ENCODE measurements at regions of chr9 and their contacts with region 1.

Region 1: GRCh38 chr9:84781458-84781857 is 111.9 kb downstream of the NTRK2 start:
- DNase-seq: peak; percentile 28
- H3K4me3 Mint-ChIP-seq: no peak overlapping the region
- H3K27ac Mint-ChIP-seq: no peak overlapping the region
- H3K4me1 Mint-ChIP-seq: no peaks in the 10 kb centered on the region
- H3K27me3 Mint-ChIP-seq: no peaks in the 10 kb centered on the region
- CTCF ChIP-seq: no peak

Region 2: GRCh38 chr9:84697509-84698114 is 83.8 kb before region 1 on chr9:
- CTCF ChIA-PET with region 1: interaction called, 9 read pairs
- intact Hi-C with region 1: loop called (anchors 1 kb)
- DNase-seq: peak; percentile 78
- H3K4me3 Mint-ChIP-seq: no peak overlapping the region
- H3K27ac Mint-ChIP-seq: no peak overlapping the region
- H3K4me1 Mint-ChIP-seq: no peaks in the 10 kb centered on the region
- H3K27me3 Mint-ChIP-seq: no peaks in the 10 kb centered on the region
- CTCF ChIP-seq: peak; percentile 53

Region 3: DNA sequence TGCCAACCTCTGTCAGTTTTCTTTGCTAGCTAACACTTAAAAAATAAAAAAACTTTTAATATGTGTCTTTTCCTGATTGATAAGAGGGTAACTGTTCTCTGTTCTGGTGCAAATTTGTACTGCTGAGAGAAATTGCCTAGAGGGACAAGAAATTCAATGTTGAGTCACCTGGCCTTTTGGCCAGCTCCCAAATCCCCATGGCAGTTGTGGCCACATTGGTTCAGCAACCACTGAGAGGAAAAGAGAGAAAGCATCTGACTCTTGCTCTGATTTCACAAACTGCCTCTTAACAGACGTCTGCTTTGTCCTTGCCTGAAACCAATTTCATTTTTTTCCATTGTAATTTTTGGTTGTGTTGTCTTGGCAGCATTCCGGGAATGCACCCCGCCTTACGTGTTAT is 69.6 kb before region 1 on chr9:
- CTCF ChIA-PET with region 1: no interaction called
- intact Hi-C with region 1: loop called (anchors 5 kb)
- DNase-seq: peak; percentile 82
- H3K4me3 Mint-ChIP-seq: peak overlapping the region; percentile 56
- H3K27ac Mint-ChIP-seq: peak overlapping the region; percentile 84
- H3K4me1 Mint-ChIP-seq: peaks cover 54% of the 10 kb centered on the region
- H3K27me3 Mint-ChIP-seq: no peaks in the 10 kb centered on the region
- CTCF ChIP-seq: no peak

Region 4: DNA sequence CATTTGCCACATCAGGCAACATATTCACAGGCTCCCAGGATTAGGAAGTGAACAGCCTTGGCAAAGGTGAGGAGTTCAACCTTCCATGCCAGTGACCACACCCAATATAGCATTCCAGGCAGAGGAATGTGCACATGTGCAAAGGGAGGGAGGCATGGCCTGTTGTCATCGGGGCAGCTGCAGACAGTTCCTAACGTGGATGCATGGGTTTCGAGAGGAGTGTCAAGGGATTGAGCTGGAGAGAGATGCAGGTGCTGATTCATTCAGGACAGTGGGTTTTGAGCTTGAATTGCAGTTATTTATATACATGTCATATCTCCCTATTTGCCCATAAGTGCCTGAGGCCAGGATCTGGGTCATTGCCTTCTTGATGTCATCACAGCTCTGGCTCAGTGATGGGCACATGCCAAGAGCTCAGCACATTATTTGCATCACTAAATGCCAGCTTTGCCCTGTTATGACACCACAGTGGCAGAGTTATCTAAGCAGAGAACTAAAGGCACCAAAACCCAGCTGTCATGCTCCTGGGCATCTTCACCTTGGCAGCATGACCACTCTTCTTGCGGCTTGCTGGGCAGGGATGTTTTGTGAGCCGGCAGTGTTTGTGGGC is 166.0 kb after region 1 on chr9:
- CTCF ChIA-PET with region 1: no interaction called
- intact Hi-C with region 1: loop called (anchors 5 kb)
- DNase-seq: peak; percentile 12
- H3K4me3 Mint-ChIP-seq: no peak overlapping the region
- H3K27ac Mint-ChIP-seq: no peak overlapping the region
- H3K4me1 Mint-ChIP-seq: peaks cover 27% of the 10 kb centered on the region
- H3K27me3 Mint-ChIP-seq: no peaks in the 10 kb centered on the region
- CTCF ChIP-seq: no peak

Measured in Calu3 (cell line).